Activated T-helper 2 cell treated with anti-CD3 and anti-CD28 coated beads, Interferon-gamma antibody, Interleukin-2, Interleukin-4, amounts not matched to agents 10 μg/mL and 5 μg/mL and 100 μg/mL, durations not matched to agents 14 hours and 24 hours and 36 hours (primary cell): ENCODE measurements at regions of chr12 and their contacts with region 1.

Region 1: GRCh38 chr12:121678716-121679580 is 9.5 kb upstream of the MORN3 start:
- DNase-seq: no peak
- H3K4me3 Mint-ChIP-seq: no peak overlapping the region
- H3K27ac Mint-ChIP-seq: no peak overlapping the region
- H3K4me1 Mint-ChIP-seq: peaks cover 2% of the 10 kb centered on the region
- H3K27me3 Mint-ChIP-seq: no peaks in the 10 kb centered on the region

Region 2: GRCh38 chr12:121494093-121494787 is 184.7 kb before region 1 on chr12:
- intact Hi-C with region 1: loop called (anchors 2 kb)
- DNase-seq: peak; percentile 28
- H3K4me3 Mint-ChIP-seq: no peak overlapping the region
- H3K27ac Mint-ChIP-seq: no peak overlapping the region
- H3K4me1 Mint-ChIP-seq: peaks cover 4% of the 10 kb centered on the region
- H3K27me3 Mint-ChIP-seq: no peaks in the 10 kb centered on the region